ENCODE measurements at regions of chr14 and their contacts with region 1.

Region 1: GRCh38 chr14:99737451-99737951 is 53.4 kb downstream of the CYP46A1 start:
- DNase-seq: peak in 1 of 2 donors; percentile 54
- ATAC-seq: peak; percentile 57 to 64
- H3K4me3 ChIP-seq: peak overlapping the region; percentile 61 to 69 (median 64)
- H3K27ac ChIP-seq: peak overlapping the region; percentile 77 to 86 (median 84)
- H3K4me1 ChIP-seq: peaks cover 50 to 65% of the 10 kb centered on the region in 2 donors
- H3K27me3 ChIP-seq: no peaks in the 10 kb centered on the region
- CTCF ChIP-seq: no peak
- POLR2A ChIP-seq: peak in 1 of 2 donors; percentile 23

Region 2: GRCh38 chr14:99683619-99684355 is 53.7 kb before region 1 on chr14 and contains the start of gene CYP46A1:
- in situ Hi-C with region 1: no loop called
- intact Hi-C with region 1: loop called (anchors 5 kb)
- DNase-seq: peak; percentile 100
- ATAC-seq: peak; percentile 87 to 94
- H3K4me3 ChIP-seq: peak within 1 kb of the TSS; percentile 82 to 99 (median 90)
- H3K27ac ChIP-seq: peak within 1 kb of the TSS; percentile 75 to 90 (median 88)
- H3K4me1 ChIP-seq: peaks cover 7 to 11% of the 10 kb centered on the region in 2 donors
- H3K27me3 ChIP-seq: no peaks in the 10 kb centered on the region
- CTCF ChIP-seq: peak in 1 of 5 experiments; percentile 18
- POLR2A ChIP-seq: no peak
- total RNA-seq, gene CYP46A1: 0.18 to 2.2 (median 0.45) TPM

Region 3: GRCh38 chr14:99752486-99753121 is 15.1 kb after region 1 on chr14:
- in situ Hi-C with region 1: no loop called
- intact Hi-C with region 1: no loop called
- DNase-seq: no peak
- ATAC-seq: no peak
- H3K4me3 ChIP-seq: no peak overlapping the region
- H3K27ac ChIP-seq: peak overlapping the region in 3 of 4 donors; percentile 37 to 53 (median 37)
- H3K4me1 ChIP-seq: peaks cover 49 to 52% of the 10 kb centered on the region in 2 donors
- H3K27me3 ChIP-seq: no peaks in the 10 kb centered on the region
- CTCF ChIP-seq: no peak
- POLR2A ChIP-seq: no peak

Region 4: GRCh38 chr14:99891900-99892299 is 154.4 kb after region 1 on chr14:
- in situ Hi-C with region 1: loop called in 1 of 4 experiments (anchors 5 kb)
- intact Hi-C with region 1: no loop called
- DNase-seq: no peak
- ATAC-seq: no peak
- H3K4me3 ChIP-seq: no peak overlapping the region
- H3K27ac ChIP-seq: no peak overlapping the region
- H3K4me1 ChIP-seq: no peaks in the 10 kb centered on the region
- H3K27me3 ChIP-seq: no peaks in the 10 kb centered on the region
- CTCF ChIP-seq: no peak
- POLR2A ChIP-seq: no peak